Posterior vena cava (tissue), 2 donors: ENCODE measurements at regions of chr19 and their contacts with region 1.

Region 1: DNA sequence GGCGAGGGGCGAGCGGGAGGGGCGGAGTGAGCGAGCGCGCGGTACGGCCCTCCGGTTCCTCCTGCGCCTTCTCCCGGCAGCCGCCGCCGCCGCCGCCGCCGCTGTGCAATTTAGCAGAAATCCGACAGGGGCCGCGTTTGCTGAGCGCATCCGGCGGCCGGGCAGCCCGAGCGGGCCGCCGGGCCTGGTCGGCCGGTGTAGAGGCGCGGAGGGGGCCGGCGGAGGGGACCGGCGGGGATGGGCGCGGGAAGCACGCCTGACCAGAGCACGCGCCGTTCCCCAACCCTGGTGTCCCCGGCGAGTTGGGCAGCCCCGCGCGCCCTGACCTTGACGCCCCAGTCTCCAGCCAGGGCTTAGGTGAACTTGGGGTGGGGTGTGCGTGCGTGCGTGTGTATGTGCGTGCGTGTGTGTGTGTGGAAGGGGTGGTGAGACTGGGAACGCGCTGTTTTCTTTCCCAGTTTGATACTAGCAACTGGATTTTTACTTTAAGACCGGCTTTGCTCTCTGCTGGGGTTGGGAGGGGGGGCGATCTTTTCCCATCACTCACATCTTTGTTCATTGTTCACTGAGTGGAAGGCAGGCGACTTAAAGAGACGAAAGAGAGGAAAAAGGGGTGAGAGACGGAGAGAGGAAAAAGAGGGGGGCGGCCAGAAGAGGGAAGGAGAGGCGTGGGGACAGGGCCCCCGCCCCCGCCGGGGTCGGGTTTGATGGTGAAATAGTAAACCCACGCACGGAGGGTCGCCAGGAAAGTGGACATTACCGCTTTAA is 144.3 kb upstream of the ZNF536 start:
- DNase-seq: peak; percentile 89

Region 2: DNA sequence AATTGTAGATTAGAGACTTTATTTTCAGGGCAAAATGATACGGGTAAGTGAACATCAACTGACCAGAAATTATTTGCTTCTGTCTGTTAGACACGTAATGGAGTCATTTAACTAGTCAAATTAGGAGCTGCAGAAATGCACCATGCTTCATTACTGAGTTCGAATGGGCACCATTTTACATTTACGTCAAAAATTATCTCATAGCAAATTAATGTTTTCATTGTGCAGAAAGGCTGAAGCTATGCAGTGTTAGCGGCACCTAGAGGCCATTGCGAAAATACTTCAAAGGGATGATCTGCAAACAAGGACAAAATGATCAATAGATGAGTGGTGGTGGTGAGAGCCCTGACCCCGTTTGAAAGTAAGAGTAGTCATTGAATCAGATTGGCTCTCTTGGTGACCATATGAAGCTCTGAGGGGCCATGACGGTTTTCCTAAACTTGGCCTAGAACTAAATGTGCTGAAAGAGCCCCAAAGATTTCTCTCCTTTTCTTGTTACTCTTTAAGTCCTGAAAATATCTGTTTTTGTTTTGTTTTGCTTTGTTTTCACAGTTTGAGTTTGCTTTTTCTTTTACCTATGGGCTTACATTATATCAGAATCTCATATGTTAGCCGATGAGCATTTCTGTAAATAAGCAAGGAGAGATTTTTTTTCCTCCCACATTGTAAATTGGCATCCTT is 422.2 kb after region 1 on chr19:
- intact Hi-C with region 1: loop called in 1 of 2 experiments (anchors 10 kb)
- DNase-seq: no peak